ENCODE measurements at regions of chr3 and their contacts with region 1.

Region 1: DNA sequence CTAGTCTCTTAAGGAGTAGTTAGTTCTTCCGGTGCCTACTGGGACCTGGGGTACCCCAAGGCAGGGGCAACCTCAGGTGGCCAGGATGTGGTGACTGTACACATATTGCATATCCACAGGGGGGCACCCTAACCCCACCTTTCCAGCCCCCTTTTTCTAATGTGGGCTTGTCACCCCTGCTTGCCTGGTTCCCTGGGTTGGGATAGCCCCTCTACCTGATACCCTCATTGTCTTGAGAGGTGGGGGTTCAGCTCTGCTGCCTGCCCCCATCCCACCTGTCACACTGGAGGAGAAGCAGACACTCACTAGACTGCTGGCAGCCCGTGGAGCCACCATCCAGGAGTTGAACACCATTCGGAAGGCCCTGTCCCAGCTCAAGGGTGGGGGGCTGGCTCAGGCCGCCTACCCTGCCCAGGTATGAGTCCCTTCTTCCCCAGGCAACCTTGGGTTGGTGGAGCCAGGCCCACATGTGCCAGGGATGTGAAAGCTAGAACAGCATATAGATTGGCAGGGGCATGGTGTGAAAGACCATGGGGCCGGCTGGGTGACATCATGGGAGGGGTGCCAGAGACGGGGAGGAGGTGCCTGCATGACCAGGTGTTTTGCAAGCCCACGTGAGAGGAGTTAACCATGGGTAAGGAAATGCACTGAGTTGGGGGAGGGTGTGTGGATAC is 4.0 kb downstream of the GLYCTK start:
- DNase-seq: peak; percentile 57
- ATAC-seq: peak; percentile 22
- H3K4me3 Mint-ChIP-seq: peak overlapping the region; percentile 56
- H3K27ac Mint-ChIP-seq: peak overlapping the region; percentile 43
- H3K4me1 Mint-ChIP-seq: peaks cover 30% of the 10 kb centered on the region
- H3K27me3 Mint-ChIP-seq: no peaks in the 10 kb centered on the region
- CTCF ChIP-seq: no peak

Region 2: DNA sequence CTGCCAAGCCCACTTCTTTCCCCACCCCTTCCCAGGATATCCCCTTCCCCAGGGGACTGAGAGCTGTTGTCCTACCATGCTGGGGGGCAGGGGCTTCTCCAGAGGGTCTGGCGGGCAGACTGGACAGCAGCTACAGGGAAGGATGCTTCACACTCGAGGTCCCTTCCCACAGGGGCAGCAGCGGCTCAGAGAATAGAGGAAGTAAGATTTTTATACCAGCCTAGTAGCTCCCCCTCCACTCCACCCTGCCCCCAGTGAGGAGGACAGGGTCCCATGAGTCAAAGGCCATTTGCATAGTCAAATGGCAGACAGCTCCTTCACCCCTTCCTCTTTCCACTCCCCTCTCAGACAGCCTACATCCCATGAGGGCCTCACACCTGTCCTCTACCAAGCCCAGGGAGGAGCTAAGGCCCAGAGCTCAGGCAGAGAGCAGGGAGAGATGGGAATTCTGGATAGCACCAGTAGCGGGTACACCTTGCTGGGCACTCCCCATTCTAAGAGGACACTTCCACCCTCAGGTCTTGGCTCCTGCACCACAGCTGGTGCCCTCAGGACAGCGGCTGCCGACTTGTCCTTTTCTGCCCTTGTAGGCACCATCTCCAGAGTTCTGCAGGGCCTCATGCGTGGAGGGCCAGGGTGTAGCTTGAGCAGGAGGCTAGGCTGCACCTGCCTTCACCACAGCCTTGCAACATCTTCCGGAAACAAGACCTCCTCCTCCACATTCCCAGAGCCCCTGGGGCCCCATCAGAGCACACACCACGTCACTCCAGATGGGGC is 66.0 kb before region 1 on chr3 and contains the start of gene TLR9:
- CTCF ChIA-PET with region 1: interaction called, 30 read pairs
- POLR2A ChIA-PET with region 1: interaction called, 62 read pairs
- intact Hi-C with region 1: loop called (anchors 1 kb)
- DNase-seq: peak; percentile 77
- ATAC-seq: peak; percentile 87
- H3K4me3 Mint-ChIP-seq: peak within 1 kb of the TSS; percentile 90
- H3K27ac Mint-ChIP-seq: peak within 1 kb of the TSS; percentile 97
- H3K4me1 Mint-ChIP-seq: peaks cover 77% of the 10 kb centered on the region
- H3K27me3 Mint-ChIP-seq: no peaks in the 10 kb centered on the region
- CTCF ChIP-seq: no peak
- total RNA-seq, gene TLR9: 10.4 and 11.4 TPM in 2 replicates

Region 3: GRCh38 chr3:52238761-52239701 is 52.6 kb before region 1 on chr3 and contains the start of gene TWF2:
- CTCF ChIA-PET with region 1: interaction called, 4 read pairs
- POLR2A ChIA-PET with region 1: interaction called, 22 read pairs
- intact Hi-C with region 1: no loop called
- DNase-seq: peak; percentile 94
- ATAC-seq: peak; percentile 86
- H3K4me3 Mint-ChIP-seq: peak within 1 kb of the TSS; percentile 96
- H3K27ac Mint-ChIP-seq: peak within 1 kb of the TSS; percentile 93
- H3K4me1 Mint-ChIP-seq: peaks cover 72% of the 10 kb centered on the region
- H3K27me3 Mint-ChIP-seq: no peaks in the 10 kb centered on the region
- CTCF ChIP-seq: no peak
- total RNA-seq, gene TWF2: 74.1 and 76.7 TPM in 2 replicates

Region 4: GRCh38 chr3:52253314-52254304 is 38.0 kb before region 1 on chr3:
- CTCF ChIA-PET with region 1: no interaction called
- POLR2A ChIA-PET with region 1: interaction called, 26 read pairs
- intact Hi-C with region 1: loop called (anchors 1 kb)
- DNase-seq: peak; percentile 58
- ATAC-seq: peak; percentile 96
- H3K4me3 Mint-ChIP-seq: peak overlapping the region; percentile 76
- H3K27ac Mint-ChIP-seq: peak overlapping the region; percentile 97
- H3K4me1 Mint-ChIP-seq: peaks cover 42% of the 10 kb centered on the region
- H3K27me3 Mint-ChIP-seq: no peaks in the 10 kb centered on the region
- CTCF ChIP-seq: no peak

Region 5: DNA sequence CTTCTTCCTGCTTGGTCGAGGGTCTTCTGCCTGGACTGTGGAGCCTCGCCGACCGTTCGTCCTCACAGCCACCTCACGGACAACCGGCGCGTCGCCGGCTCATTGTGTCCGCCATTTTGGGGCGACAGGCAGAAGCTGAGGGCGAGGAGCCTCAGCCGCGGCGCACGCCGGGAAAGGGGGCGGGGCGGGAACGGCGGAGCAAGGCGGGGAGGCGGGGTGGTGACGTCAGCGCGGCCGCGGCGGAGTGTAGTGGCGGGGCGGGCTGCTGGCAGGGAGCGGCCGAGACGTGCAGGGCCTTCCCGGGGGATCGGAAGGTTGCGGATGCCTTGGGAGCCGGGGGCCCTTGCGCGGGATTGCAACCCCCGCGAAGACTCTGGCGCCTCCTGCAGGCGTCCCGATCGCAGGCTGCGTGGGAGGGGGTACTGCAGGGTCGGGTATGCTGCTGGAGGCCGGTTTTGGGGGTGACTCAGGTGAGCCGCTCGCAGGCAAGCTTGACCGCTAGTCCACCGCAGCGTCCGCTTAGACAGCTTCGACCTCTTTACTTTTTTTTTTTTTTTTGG is 13.1 kb before region 1 on chr3 and contains the start of gene WDR82:
- CTCF ChIA-PET with region 1: interaction called, 4 read pairs
- POLR2A ChIA-PET with region 1: interaction called, 107 read pairs
- intact Hi-C with region 1: loop called (anchors 1 kb)
- DNase-seq: peak; percentile 100
- ATAC-seq: peak; percentile 85
- H3K4me3 Mint-ChIP-seq: peak within 1 kb of the TSS; percentile 99
- H3K27ac Mint-ChIP-seq: peak within 1 kb of the TSS; percentile 98
- H3K4me1 Mint-ChIP-seq: peaks cover 55% of the 10 kb centered on the region
- H3K27me3 Mint-ChIP-seq: no peaks in the 10 kb centered on the region
- CTCF ChIP-seq: no peak
- total RNA-seq, gene WDR82: 84.1 and 86.4 TPM in 2 replicates

Region 6: GRCh38 chr3:52339612-52340011 is 48.0 kb after region 1 on chr3:
- CTCF ChIA-PET with region 1: interaction called, 248 read pairs
- POLR2A ChIA-PET with region 1: interaction called, 5 read pairs
- intact Hi-C with region 1: loop called (anchors 1 kb)
- DNase-seq: no peak
- ATAC-seq: peak; percentile 40
- H3K4me3 Mint-ChIP-seq: no peak overlapping the region
- H3K27ac Mint-ChIP-seq: no peak overlapping the region
- H3K4me1 Mint-ChIP-seq: no peaks in the 10 kb centered on the region
- H3K27me3 Mint-ChIP-seq: no peaks in the 10 kb centered on the region
- CTCF ChIP-seq: peak; percentile 48

Region 7: DNA sequence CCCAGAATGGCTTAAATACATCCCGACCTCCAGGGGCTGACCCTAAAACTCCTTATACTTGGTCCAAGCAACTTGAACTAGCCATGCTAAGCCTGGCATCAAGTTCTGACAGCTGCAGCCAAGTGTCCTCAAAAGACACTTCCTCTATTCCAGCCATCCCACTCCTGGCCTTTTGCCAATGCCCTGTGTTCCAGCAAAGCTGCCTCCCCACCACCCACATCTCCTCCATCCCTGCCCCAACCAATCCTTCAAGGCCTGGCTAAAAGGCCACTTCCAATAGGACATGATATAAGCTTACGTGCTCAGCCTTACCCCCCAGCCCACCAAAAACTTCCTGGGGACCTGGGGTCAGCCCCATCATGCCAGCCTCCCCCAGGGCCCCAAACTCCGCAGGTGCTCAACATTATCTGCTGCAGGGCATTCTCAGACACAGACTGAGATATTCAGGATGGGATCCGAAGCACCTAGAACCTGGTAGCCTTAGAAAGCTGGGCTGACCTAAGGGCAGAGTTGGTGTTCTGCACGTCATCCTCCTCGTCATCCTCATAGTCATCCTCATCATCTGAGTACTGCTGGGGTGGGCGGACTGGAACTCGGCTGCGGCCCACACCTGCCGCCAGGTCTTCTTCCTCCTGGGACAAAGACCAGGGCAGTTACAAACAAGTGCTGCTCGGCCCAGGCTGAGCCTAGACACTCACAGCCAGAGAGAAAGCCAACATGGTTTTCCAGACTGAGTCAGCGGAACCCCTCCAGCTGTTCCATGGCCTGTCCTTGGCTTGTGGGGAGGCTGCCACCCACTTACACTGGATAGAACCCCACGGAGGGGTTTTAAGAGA is 112.5 kb after region 1 on chr3:
- CTCF ChIA-PET with region 1: no interaction called
- POLR2A ChIA-PET with region 1: no interaction called
- intact Hi-C with region 1: no loop called
- DNase-seq: no peak
- ATAC-seq: no peak
- H3K4me3 Mint-ChIP-seq: no peak overlapping the region
- H3K27ac Mint-ChIP-seq: no peak overlapping the region
- H3K4me1 Mint-ChIP-seq: peaks cover 14% of the 10 kb centered on the region
- H3K27me3 Mint-ChIP-seq: no peaks in the 10 kb centered on the region
- CTCF ChIP-seq: no peak

Region 8: DNA sequence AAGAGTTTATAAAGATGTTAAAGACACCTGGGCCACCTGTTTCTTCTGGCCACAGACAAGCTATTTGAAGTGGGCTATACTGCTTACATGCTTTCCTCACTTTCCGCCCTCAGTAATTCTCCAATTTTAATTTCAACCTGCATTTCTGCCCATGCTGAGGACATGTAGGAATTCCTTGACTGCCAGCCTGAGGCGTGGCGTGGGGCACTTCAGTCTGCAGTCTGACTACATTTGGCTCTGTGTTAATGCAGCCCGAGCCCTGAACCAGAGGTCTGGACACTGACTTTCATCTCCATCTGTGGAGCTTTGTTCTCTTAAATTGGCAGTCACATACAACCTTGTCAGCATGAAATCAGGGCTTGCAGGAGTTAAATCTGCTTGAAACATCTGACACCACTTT is 253.3 kb after region 1 on chr3:
- CTCF ChIA-PET with region 1: no interaction called
- POLR2A ChIA-PET with region 1: no interaction called
- intact Hi-C with region 1: no loop called
- DNase-seq: no peak
- ATAC-seq: no peak
- H3K4me3 Mint-ChIP-seq: no peak overlapping the region
- H3K27ac Mint-ChIP-seq: no peak overlapping the region
- H3K4me1 Mint-ChIP-seq: no peaks in the 10 kb centered on the region
- H3K27me3 Mint-ChIP-seq: no peaks in the 10 kb centered on the region
- CTCF ChIP-seq: no peak

Region 9: GRCh38 chr3:52685709-52686691 is 394.4 kb after region 1 on chr3 and contains the starts of genes GNL3 and PBRM1:
- CTCF ChIA-PET with region 1: no interaction called
- POLR2A ChIA-PET with region 1: no interaction called
- intact Hi-C with region 1: loop called (anchors 5 kb)
- DNase-seq: peak; percentile 92
- ATAC-seq: peak; percentile 89
- H3K4me3 Mint-ChIP-seq: peak within 1 kb of the TSS; percentile 96
- H3K27ac Mint-ChIP-seq: peak within 1 kb of the TSS; percentile 95
- H3K4me1 Mint-ChIP-seq: peaks cover 53% of the 10 kb centered on the region
- H3K27me3 Mint-ChIP-seq: no peaks in the 10 kb centered on the region
- CTCF ChIP-seq: no peak
- total RNA-seq, gene GNL3: 137 and 145 TPM in 2 replicates
- total RNA-seq, gene PBRM1: 60.0 and 62.1 TPM in 2 replicates

Measured in activated B cell treated with CpG ODN at 0.5 μM for 24 hours (primary cell).